Activated naive CD4-positive, alpha-beta T cell treated with anti-CD3 and anti-CD28 coated beads for 36 hours (primary cell): ENCODE measurements at regions of chr10 and their contacts with region 1.

Region 1: GRCh38 chr10:70093335-70093944 is 39.2 kb downstream of the AIFM2 start:
- DNase-seq: peak; percentile 52
- H3K4me3 Mint-ChIP-seq: peak overlapping the region; percentile 74
- H3K27ac Mint-ChIP-seq: peak overlapping the region; percentile 73
- H3K4me1 Mint-ChIP-seq: peaks cover 32% of the 10 kb centered on the region
- H3K27me3 Mint-ChIP-seq: no peaks in the 10 kb centered on the region

Region 2: GRCh38 chr10:69936091-69936490 is 157.3 kb before region 1 on chr10:
- CTCF ChIA-PET with region 1: no interaction called
- intact Hi-C with region 1: no loop called
- DNase-seq: peak; percentile 32
- H3K4me3 Mint-ChIP-seq: no peak overlapping the region
- H3K27ac Mint-ChIP-seq: no peak overlapping the region
- H3K4me1 Mint-ChIP-seq: no peaks in the 10 kb centered on the region
- H3K27me3 Mint-ChIP-seq: peaks cover 3% of the 10 kb centered on the region

Region 3: GRCh38 chr10:70115948-70116682 is 22.7 kb after region 1 on chr10:
- CTCF ChIA-PET with region 1: interaction called, 46 read pairs
- intact Hi-C with region 1: no loop called
- DNase-seq: peak; percentile 70
- H3K4me3 Mint-ChIP-seq: no peak overlapping the region
- H3K27ac Mint-ChIP-seq: no peak overlapping the region
- H3K4me1 Mint-ChIP-seq: peaks cover 6% of the 10 kb centered on the region
- H3K27me3 Mint-ChIP-seq: no peaks in the 10 kb centered on the region

Region 4: GRCh38 chr10:70162892-70163201 is 69.4 kb after region 1 on chr10:
- CTCF ChIA-PET with region 1: no interaction called
- intact Hi-C with region 1: loop called (anchors 2 kb)
- DNase-seq: peak; percentile 87
- H3K4me3 Mint-ChIP-seq: peak overlapping the region; percentile 20
- H3K27ac Mint-ChIP-seq: peak overlapping the region; percentile 95
- H3K4me1 Mint-ChIP-seq: peaks cover 65% of the 10 kb centered on the region
- H3K27me3 Mint-ChIP-seq: no peaks in the 10 kb centered on the region

Region 5: DNA sequence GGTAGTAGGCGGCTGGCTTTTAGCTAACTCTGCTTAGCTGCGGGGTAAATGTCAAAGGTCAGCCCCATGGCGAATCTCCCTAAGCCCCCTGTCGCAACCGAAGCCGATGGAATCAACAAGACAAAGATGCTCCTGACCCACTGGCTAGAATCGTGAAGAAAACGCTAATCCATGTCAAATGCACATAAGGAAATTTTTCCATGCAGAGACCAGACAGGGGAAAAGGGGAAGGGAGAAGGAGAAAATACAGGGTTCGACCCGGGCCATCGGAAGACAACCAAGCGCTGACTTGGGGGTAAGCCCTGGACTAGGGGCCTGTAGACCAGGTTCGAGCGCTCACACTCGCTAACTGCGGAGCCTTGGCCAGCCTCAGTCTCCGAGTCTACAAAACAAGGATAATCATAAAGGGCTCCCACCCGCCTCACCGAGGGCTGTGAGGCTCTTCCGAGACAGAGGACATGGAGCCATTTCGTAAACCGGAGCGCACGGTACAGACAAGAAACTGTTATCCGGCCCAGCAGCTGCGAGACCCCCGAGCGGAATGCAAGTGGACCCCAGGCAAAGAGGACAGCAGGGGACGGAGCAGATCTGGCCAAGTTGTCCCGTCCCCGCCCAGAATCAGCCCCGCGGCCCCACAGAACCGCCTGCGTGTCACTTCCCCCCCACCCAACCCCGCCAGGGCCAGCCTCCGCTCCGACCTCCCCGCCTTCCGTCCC is 76.4 kb after region 1 on chr10:
- CTCF ChIA-PET with region 1: interaction called, 3 read pairs
- intact Hi-C with region 1: loop called (anchors 2 kb)
- DNase-seq: no peak
- H3K4me3 Mint-ChIP-seq: peak overlapping the region; percentile 87
- H3K27ac Mint-ChIP-seq: peak overlapping the region; percentile 90
- H3K4me1 Mint-ChIP-seq: peaks cover 66% of the 10 kb centered on the region
- H3K27me3 Mint-ChIP-seq: no peaks in the 10 kb centered on the region